Left ventricle myocardium inferior (tissue), 1 donor: ENCODE measurements at regions of chr7 and their contacts with region 1.

Region 1: GRCh38 chr7:155729834-155730233 is 82.4 kb downstream of the SHH start:
- DNase-seq: no peak
- H3K4me3 ChIP-seq: no peak overlapping the region
- H3K27ac ChIP-seq: no peak overlapping the region
- H3K4me1 ChIP-seq: peaks cover 80% of the 10 kb centered on the region
- H3K27me3 ChIP-seq: no peaks in the 10 kb centered on the region
- CTCF ChIP-seq: no peak

Region 2: DNA sequence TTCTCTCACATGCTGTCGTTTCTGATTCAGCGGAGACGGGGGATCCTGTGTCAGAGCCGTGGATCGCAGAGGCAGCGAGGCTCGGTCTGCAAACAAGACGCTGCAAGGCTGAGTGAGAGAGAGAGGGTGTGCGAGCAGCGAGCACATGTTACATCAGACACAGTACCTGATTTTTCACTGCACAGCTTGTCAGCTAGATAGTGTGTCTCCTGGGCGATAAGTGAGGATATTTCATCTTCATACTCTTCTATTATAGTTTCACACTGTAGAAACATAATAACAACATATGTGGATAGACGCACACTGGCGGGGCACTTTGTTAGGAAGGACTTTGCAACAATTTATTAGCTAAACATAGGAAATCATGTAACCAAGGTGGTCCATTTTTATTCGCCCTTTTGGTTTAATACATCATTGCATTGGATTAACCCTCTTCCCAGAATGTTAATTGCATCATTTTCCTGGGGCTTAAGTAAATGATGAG is 222.9 kb before region 1 on chr7:
- intact Hi-C with region 1: no loop called
- DNase-seq: no peak
- H3K4me3 ChIP-seq: no peak overlapping the region
- H3K27ac ChIP-seq: no peak overlapping the region
- H3K4me1 ChIP-seq: peaks cover 11% of the 10 kb centered on the region
- H3K27me3 ChIP-seq: peaks cover 100% of the 10 kb centered on the region
- CTCF ChIP-seq: no peak

Region 3: GRCh38 chr7:155644178-155644970 is 85.5 kb before region 1 on chr7 and contains the start of gene RBM33:
- intact Hi-C with region 1: loop called (anchors 5 kb)
- DNase-seq: peak; percentile 78
- H3K4me3 ChIP-seq: peak within 1 kb of the TSS; percentile 96
- H3K27ac ChIP-seq: peak within 1 kb of the TSS; percentile 95
- H3K4me1 ChIP-seq: peaks cover 45% of the 10 kb centered on the region
- H3K27me3 ChIP-seq: no peaks in the 10 kb centered on the region
- CTCF ChIP-seq: no peak
- total RNA-seq, gene RBM33: 30.8 TPM